Heart right ventricle (tissue), 16 donors: ENCODE measurements at regions of chr19 and their contacts with region 1.

Region 1: DNA sequence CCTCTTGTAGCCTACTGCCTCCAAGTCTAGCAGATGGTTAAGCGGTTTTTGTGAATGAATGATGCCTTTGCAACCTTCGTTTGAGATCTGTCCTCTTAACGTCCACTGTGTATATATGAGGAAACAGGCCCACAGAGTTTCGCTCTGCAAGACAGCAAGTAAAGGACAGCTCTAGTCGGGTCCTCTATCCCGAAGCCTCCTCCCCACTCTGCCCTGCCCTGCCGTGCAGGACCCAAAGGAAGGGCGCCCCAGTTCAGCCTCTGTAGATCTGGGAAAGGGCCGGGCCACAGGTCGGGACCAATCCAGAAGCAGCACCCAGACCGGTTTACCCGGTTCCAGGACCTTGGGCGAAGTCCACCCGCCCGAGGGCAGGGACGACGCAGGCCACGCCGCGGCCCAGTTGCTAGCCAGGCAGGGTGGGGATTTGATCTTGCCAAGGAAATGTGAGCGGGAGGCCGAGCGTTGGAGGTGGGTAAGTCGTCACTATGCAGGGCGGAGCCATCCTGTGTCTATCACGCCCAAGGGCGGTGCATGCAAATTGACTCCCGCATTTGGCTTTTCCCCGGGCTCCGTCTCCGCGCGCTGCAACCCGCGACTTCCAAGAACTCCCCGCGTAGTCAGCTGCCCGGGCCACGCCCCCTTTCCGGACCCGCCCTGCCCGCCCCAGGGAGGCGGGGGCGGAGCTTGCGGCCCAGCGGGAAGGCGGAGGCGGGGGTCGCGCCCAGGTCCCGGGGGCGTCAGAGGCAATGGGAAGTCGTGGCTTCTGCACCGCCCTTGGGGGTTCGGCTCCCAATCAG is 12.5 kb downstream of the IER2 start:
- DNase-seq: peak; percentile 96 to 99
- ATAC-seq: peak; percentile 84 to 92 (median 87)
- H3K4me3 ChIP-seq: peak overlapping the region in 9 of 10 donors; percentile 17 to 55 (median 45)
- H3K27ac ChIP-seq: peak overlapping the region; percentile 81 to 99 (median 96)
- H3K4me1 ChIP-seq: peaks cover 18 to 79% (median 59%) of the 10 kb centered on the region in 9 donors
- H3K27me3 ChIP-seq: no peaks in the 10 kb centered on the region
- CTCF ChIP-seq: no peak

Region 2: DNA sequence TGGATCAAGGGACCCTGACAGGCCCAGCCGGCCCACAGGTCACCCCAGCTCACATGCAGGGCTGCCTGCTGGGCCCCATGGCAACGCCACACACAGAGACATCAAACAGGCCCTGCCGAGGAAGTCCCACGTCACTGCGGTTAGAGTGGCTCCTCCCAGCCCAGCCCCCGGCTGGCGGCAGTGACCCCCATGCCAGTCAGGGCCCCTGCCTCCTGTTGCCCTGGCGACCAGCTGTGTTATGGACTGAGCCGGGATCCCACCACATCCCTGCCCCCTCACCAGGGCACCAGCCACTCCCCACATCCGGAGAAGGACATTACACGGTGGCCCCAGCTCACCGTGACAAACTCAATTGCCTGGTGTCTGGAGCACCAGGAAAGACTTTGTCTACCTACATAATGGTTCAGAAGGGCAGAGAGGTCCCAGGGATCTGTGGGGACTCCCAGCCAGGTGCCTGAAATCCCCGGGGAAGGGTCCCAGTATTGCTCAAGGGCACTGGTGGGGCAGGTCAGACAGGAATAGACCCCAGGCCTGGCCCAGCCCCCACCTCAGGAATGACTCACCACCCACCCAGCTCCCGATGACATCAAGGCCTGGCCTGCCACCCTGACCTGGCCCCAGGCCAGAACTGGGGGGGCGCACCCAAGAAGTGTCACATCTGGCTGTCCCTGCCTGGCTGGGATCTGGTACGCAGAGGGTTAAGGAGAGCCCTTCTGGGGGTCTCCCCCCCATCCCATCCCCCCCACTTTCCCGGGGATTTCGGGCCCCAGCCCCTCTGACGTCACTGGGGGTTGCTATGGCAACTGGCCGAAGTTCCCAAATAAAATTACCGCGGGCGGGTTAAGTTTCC is 684.1 kb after region 1 on chr19:
- intact Hi-C with region 1: loop called in 4 of 10 experiments (anchors 10 kb)
- DNase-seq: peak; percentile 89 to 96
- ATAC-seq: peak; percentile 39 to 77 (median 74)
- H3K4me3 ChIP-seq: peak overlapping the region in 9 of 10 donors; percentile 37 to 64 (median 58)
- H3K27ac ChIP-seq: peak overlapping the region; percentile 92 to 100 (median 99)
- H3K4me1 ChIP-seq: peaks cover 33 to 80% (median 68%) of the 10 kb centered on the region in 9 donors
- H3K27me3 ChIP-seq: no peaks in the 10 kb centered on the region
- CTCF ChIP-seq: no peak